ENCODE measurements at regions of chr3 and their contacts with region 1.

Region 1: GRCh38 chr3:149487598-149488197 is 13.2 kb downstream of the TM4SF4 start:
- DNase-seq: no peak
- H3K4me3 ChIP-seq: no peak overlapping the region
- CTCF ChIP-seq: no peak

Region 2: GRCh38 chr3:149473357-149474249 is 14.1 kb before region 1 on chr3:
- CTCF ChIA-PET with region 1: interaction called, 47 read pairs
- POLR2A ChIA-PET with region 1: no interaction called
- DNase-seq: peak; percentile 55
- H3K4me3 ChIP-seq: no peak overlapping the region
- CTCF ChIP-seq: no peak

Region 3: GRCh38 chr3:149501524-149501923 is 13.8 kb after region 1 on chr3:
- CTCF ChIA-PET with region 1: interaction called, 26 read pairs
- POLR2A ChIA-PET with region 1: no interaction called
- DNase-seq: peak; percentile 89
- H3K4me3 ChIP-seq: no peak overlapping the region
- CTCF ChIP-seq: no peak